BJ (cell line): ENCODE measurements at regions of chr10 and their contacts with region 1.

Region 1: DNA sequence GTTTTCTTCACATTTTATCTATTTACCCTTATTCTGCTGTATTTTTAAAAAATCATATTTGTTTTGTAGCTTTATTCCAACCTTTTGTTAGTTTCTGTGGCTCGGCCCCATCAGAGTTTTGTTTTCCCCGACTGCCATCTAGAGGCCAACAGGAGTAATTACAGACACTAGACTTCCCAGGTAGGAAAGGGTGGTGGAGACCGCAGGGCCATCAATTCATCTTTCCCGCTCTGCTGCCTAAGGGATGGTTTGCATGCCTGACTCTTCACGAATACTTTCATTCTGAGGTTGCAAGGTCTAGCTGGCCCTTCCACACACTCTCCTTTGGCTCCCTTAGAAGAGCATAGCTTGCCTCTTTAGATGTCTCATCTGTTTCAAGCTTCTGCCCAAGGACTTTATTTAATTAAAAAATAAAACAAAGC is 38.3 kb downstream of the LYZL2 start:
- DNase-seq: no peak
- H3K4me3 ChIP-seq: no peak overlapping the region
- H3K27me3 ChIP-seq: peaks cover 17% of the 10 kb centered on the region
- CTCF ChIP-seq: peak; percentile 78

Region 2: GRCh38 chr10:30034433-30035137 is 556.7 kb before region 1 on chr10:
- CTCF ChIA-PET with region 1: no interaction called
- POLR2A ChIA-PET with region 1: no interaction called
- DNase-seq: no peak
- H3K4me3 ChIP-seq: no peak overlapping the region
- H3K27me3 ChIP-seq: no peaks in the 10 kb centered on the region
- CTCF ChIP-seq: no peak

Region 3: GRCh38 chr10:30359373-30360206 is 231.7 kb before region 1 on chr10:
- CTCF ChIA-PET with region 1: interaction called, 15 read pairs
- POLR2A ChIA-PET with region 1: no interaction called
- DNase-seq: no peak
- H3K4me3 ChIP-seq: no peak overlapping the region
- H3K27me3 ChIP-seq: 0 out of 2 replicates have a peak, but pooled peaks cover 2% of the 10 kb centered on the region
- CTCF ChIP-seq: peak; percentile 91

Region 4: DNA sequence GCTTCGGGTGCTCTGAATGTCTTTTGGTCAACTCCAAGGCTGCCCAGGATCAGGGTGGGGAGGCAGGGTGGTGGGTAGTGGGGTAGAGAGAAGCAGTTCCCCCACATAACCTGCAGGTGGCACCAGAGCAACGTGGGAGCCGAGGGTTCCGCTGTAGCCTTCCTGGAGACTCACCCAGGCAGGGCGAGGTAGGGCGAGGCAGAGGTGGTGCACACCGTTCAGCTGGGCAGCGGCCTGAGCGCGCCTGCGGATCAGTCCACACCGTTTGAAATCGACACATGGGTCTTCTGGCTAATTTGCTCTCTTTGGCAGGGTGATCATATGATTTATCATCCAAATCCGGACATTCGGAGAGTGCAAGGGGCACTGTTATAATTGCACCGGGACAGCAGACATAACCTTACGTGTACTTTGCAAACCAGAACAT is 198.7 kb before region 1 on chr10:
- CTCF ChIA-PET with region 1: interaction called, 104 read pairs
- POLR2A ChIA-PET with region 1: no interaction called
- DNase-seq: no peak
- H3K4me3 ChIP-seq: no peak overlapping the region
- H3K27me3 ChIP-seq: peaks cover 7% of the 10 kb centered on the region
- CTCF ChIP-seq: peak; percentile 97

Region 5: GRCh38 chr10:30413996-30414576 is 177.2 kb before region 1 on chr10:
- CTCF ChIA-PET with region 1: interaction called, 13 read pairs
- POLR2A ChIA-PET with region 1: no interaction called
- DNase-seq: no peak
- H3K4me3 ChIP-seq: no peak overlapping the region
- H3K27me3 ChIP-seq: 0 out of 2 replicates have a peak, but pooled peaks cover 1% of the 10 kb centered on the region
- CTCF ChIP-seq: peak; percentile 82

Region 6: GRCh38 chr10:30606313-30606712 is 15.1 kb after region 1 on chr10:
- CTCF ChIA-PET with region 1: interaction called, 35 read pairs
- POLR2A ChIA-PET with region 1: no interaction called
- DNase-seq: no peak
- H3K4me3 ChIP-seq: no peak overlapping the region
- H3K27me3 ChIP-seq: no peaks in the 10 kb centered on the region; the same call in 1 of the 2 replicates
- CTCF ChIP-seq: no peak